ENCODE measurements at regions of chr1 and their contacts with region 1.

Region 1: DNA sequence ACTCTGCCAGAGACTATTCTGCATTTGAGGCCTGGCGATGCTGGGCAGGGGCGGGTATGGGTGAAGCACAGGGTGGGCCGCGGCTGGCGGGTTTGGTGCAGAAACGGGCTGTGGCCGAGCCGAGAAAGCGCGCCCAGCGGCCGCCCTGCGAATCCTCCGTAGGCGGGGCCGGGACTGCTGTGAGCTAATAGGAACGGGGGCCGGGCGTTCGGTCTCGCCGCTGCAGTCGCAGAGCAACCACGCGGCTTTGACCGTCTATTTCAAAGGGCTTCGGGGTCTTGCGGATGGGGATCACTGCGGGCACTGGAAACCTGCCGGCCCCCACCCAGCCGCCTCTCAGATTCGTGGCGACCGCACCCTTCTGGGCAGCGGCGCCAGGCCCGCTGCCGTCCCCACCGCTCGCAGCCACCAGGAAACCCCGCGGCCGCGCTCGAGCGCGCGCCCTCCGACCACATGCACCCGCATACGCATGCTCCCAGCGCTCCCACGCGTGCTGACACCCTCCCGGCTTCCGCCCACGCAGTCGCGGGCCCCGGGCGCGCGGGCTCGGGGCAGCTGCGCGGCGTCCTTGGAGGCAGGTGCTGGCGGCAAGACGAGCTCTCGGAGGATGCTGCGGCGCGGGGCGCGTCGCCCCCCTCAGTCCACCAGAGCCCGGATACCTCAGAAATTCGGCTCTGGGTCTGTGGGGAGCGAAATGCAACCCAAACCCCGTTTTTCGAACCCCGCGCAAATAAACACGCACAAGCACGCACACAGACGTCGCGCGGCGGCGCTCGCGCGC is 32.6 kb downstream of the DNTTIP2 start:
- DNase-seq: peak; percentile 76 to 97 (median 86)

Region 2: DNA sequence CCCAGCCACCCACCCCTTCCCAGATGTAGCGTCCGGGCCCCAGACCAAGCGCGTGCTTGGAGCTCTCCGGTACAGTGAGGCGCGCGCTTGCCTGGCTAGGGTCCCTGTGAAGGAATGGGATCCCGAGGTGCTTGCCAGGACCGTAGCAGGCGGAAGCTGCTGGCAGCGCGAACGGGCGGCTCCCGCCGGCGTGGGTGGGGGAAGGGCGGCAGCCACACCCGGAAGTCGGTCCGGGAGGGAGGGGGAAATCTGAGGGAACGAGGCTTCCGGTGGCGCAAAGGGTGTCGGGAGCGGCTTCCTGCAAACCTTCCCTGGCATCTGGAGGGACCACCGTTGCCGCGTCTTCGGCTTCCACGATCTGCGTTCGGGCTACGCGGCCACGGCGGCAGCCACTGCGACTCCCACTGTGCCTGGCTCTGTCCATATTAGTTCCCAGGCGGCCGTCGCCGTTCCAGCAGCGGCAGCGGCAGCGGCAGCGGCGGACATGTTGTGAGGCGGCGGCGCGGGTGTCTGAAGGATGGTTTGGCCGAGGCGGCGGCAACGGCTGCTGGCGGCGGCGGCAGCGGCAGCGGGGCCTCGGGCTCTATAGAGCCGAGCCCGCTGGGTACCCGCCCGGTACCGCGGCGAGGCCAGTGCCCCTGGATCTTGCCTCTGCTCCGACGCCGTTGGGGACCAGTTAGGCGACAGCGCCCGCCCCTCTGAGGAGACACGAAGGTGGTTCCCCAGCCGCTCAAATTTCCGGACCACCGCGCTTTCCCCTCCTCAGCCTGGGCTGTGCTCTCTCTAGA is 500.6 kb before region 1 on chr1 and contains the start of gene DR1:
- intact Hi-C with region 1: loop called (anchors 5 kb)
- DNase-seq: peak; percentile 89 to 99 (median 94)

Region 3: DNA sequence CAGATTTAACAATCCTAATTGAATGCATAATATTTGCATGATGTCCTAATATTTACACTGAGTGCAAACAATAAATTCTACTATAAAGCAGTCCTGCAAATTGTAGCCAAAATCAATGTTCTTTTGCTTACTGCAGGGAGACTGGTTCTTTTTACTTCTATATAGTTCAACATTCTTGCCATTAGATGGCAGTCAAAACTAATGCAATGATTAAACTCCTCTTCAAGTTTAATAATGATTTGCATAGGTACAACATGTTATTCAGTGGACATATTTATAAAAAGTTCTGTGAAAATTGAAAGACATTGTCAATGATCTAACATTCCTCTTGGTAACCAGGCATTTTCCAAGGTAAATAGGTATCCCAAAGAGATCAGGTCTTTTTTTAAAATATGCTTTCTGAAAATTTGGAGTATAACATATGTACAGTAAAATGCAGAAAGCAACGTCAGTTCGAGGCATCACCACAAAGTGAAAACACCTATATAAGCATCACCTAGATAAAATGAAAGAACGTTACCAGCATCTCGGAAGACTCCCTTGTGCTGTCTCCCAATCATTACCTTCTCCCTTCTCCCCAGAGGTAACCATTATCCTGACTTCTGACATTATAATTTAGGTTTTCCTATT is 408.3 kb before region 1 on chr1:
- intact Hi-C with region 1: loop called (anchors 2 kb)
- DNase-seq: no peak

Region 4: GRCh38 chr1:93629099-93630059 is 217.0 kb before region 1 on chr1:
- intact Hi-C with region 1: loop called (anchors 5 kb)
- DNase-seq: peak in 2 of 10 donors; percentile 38 to 46

Region 5: GRCh38 chr1:93909146-93910050 is 63.0 kb after region 1 on chr1 and contains the start of gene GCLM:
- intact Hi-C with region 1: loop called (anchors 2 kb)
- DNase-seq: peak; percentile 78 to 98 (median 86)

Region 6: GRCh38 chr1:94258873-94259331 is 412.5 kb after region 1 on chr1:
- intact Hi-C with region 1: no loop called
- DNase-seq: no peak

Measured in posterior cingulate gyrus (tissue), 11 donors.